Heart right ventricle (tissue), 16 donors: ENCODE measurements at regions of chr5 and their contacts with region 1.

Region 1: GRCh38 chr5:8394962-8395361 is 526.0 kb downstream of the MTRR start:
- DNase-seq: no peak
- ATAC-seq: no peak
- H3K4me3 ChIP-seq: no peak overlapping the region
- H3K27ac ChIP-seq: no peak overlapping the region
- H3K4me1 ChIP-seq: no peaks in the 10 kb centered on the region
- H3K27me3 ChIP-seq: no peaks in the 10 kb centered on the region
- CTCF ChIP-seq: no peak

Region 2: DNA sequence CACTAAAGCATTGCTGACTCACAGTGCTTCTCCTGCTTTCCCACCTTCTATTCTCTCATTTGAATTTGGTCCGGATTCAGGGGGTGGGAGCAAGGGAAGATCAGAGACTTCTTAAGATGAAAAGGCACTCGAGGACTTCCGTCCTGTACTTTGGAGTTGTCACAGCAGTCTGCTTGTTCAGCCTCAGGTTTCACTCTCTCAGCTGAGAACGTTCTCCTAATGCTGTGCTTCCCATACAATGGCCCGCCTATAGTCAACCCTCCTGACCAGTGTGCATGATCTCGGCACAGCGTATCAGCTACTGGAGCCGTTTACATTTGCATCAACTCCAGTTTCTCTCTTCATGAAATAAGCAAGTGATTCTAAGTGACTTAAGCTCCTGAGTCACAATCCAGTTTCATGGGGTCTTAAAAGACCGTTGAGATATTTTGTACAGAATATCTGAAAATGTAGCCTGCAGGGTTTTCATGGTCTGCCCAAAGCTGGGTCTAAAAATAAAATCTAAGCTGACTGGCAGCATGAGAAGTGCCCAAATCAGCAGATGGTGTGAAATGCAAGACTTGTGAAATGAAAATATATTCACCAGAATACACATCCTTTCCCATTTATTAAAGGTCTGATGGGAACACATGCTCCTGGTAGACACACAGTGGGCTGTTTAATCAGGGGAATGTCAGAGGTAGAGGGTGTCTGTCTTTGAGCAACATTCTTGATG is 854.0 kb before region 1 on chr5:
- intact Hi-C with region 1: no loop called
- DNase-seq: no peak
- ATAC-seq: no peak
- H3K4me3 ChIP-seq: no peak overlapping the region
- H3K27ac ChIP-seq: no peak overlapping the region
- H3K4me1 ChIP-seq: no peaks in the 10 kb centered on the region
- H3K27me3 ChIP-seq: no peaks in the 10 kb centered on the region
- CTCF ChIP-seq: no peak

Region 3: GRCh38 chr5:8254674-8255073 is 140.3 kb before region 1 on chr5:
- intact Hi-C with region 1: loop called in 1 of 10 experiments (anchors 5 kb)
- DNase-seq: no peak
- ATAC-seq: no peak
- H3K4me3 ChIP-seq: no peak overlapping the region
- H3K27ac ChIP-seq: no peak overlapping the region
- H3K4me1 ChIP-seq: no peaks in the 10 kb centered on the region
- H3K27me3 ChIP-seq: no peaks in the 10 kb centered on the region
- CTCF ChIP-seq: no peak